CD8-positive, alpha-beta T cell (primary cell): ENCODE measurements at regions of chr2 and their contacts with region 1.

Region 1: GRCh38 chr2:68251187-68251854 is 1.0 kb downstream of the PPP3R1 start:
- DNase-seq: peak; percentile 54 to 94 (median 76)
- ATAC-seq: peak; percentile 66
- H3K4me3 ChIP-seq: peak overlapping the region; percentile 68
- H3K4me3 Mint-ChIP-seq: peak overlapping the region; percentile 89
- H3K27ac ChIP-seq: peak overlapping the region; percentile 84 to 85
- H3K27ac Mint-ChIP-seq: peak overlapping the region; percentile 95
- H3K4me1 ChIP-seq: peaks cover 60% of the 10 kb centered on the region
- H3K4me1 Mint-ChIP-seq: peaks cover 42% of the 10 kb centered on the region
- H3K27me3 ChIP-seq: no peaks in the 10 kb centered on the region
- H3K27me3 Mint-ChIP-seq: no peaks in the 10 kb centered on the region
- CTCF ChIP-seq: peak; percentile 70

Region 2: GRCh38 chr2:67397143-67397986 is 854.0 kb before region 1 on chr2 and contains the start of gene ETAA1:
- CTCF ChIA-PET with region 1: no interaction called
- POLR2A ChIA-PET with region 1: no interaction called
- intact Hi-C with region 1: loop called (anchors 2 to 5 kb)
- DNase-seq: peak; percentile 87 to 95 (median 94)
- ATAC-seq: peak; percentile 97
- H3K4me3 ChIP-seq: peak within 1 kb of the TSS; percentile 61 to 90
- H3K4me3 Mint-ChIP-seq: peak within 1 kb of the TSS; percentile 97
- H3K27ac ChIP-seq: peak within 1 kb of the TSS; percentile 84 to 86
- H3K27ac Mint-ChIP-seq: peak within 1 kb of the TSS; percentile 98
- H3K4me1 ChIP-seq: peaks cover 8% of the 10 kb centered on the region
- H3K4me1 Mint-ChIP-seq: peaks cover 21% of the 10 kb centered on the region
- H3K27me3 ChIP-seq: no peaks in the 10 kb centered on the region
- H3K27me3 Mint-ChIP-seq: no peaks in the 10 kb centered on the region
- CTCF ChIP-seq: no peak
- total RNA-seq, gene ETAA1: 7.7 to 8.6 TPM

Region 3: GRCh38 chr2:68157402-68158133 is 93.8 kb before region 1 on chr2 and contains the start of gene PNO1:
- CTCF ChIA-PET with region 1: interaction called, 3 read pairs
- POLR2A ChIA-PET with region 1: interaction called, 15 read pairs
- intact Hi-C with region 1: loop called (anchors 1 kb)
- DNase-seq: peak; percentile 95 to 98 (median 97)
- ATAC-seq: peak; percentile 95
- H3K4me3 ChIP-seq: peak within 1 kb of the TSS; percentile 66 to 73
- H3K4me3 Mint-ChIP-seq: peak within 1 kb of the TSS; percentile 97
- H3K27ac ChIP-seq: peak within 1 kb of the TSS; percentile 90 to 94
- H3K27ac Mint-ChIP-seq: peak within 1 kb of the TSS; percentile 100
- H3K4me1 ChIP-seq: peaks cover 34% of the 10 kb centered on the region
- H3K4me1 Mint-ChIP-seq: peaks cover 52% of the 10 kb centered on the region
- H3K27me3 ChIP-seq: no peaks in the 10 kb centered on the region
- H3K27me3 Mint-ChIP-seq: no peaks in the 10 kb centered on the region
- CTCF ChIP-seq: no peak
- total RNA-seq, gene PNO1: 35.3 to 36.0 TPM

Region 4: GRCh38 chr2:68225119-68225632 is 26.1 kb before region 1 on chr2:
- CTCF ChIA-PET with region 1: no interaction called
- POLR2A ChIA-PET with region 1: no interaction called
- intact Hi-C with region 1: loop called (anchors 2 kb)
- DNase-seq: peak in 4 of 9 experiments; percentile 11 to 63 (median 36)
- ATAC-seq: peak; percentile 65
- H3K4me3 ChIP-seq: no peak overlapping the region
- H3K4me3 Mint-ChIP-seq: peak overlapping the region; percentile 5
- H3K27ac ChIP-seq: no peak overlapping the region
- H3K27ac Mint-ChIP-seq: peak overlapping the region; percentile 28
- H3K4me1 ChIP-seq: peaks cover 53% of the 10 kb centered on the region
- H3K4me1 Mint-ChIP-seq: peaks cover 91% of the 10 kb centered on the region
- H3K27me3 ChIP-seq: no peaks in the 10 kb centered on the region
- H3K27me3 Mint-ChIP-seq: no peaks in the 10 kb centered on the region
- CTCF ChIP-seq: no peak

Region 5: DNA sequence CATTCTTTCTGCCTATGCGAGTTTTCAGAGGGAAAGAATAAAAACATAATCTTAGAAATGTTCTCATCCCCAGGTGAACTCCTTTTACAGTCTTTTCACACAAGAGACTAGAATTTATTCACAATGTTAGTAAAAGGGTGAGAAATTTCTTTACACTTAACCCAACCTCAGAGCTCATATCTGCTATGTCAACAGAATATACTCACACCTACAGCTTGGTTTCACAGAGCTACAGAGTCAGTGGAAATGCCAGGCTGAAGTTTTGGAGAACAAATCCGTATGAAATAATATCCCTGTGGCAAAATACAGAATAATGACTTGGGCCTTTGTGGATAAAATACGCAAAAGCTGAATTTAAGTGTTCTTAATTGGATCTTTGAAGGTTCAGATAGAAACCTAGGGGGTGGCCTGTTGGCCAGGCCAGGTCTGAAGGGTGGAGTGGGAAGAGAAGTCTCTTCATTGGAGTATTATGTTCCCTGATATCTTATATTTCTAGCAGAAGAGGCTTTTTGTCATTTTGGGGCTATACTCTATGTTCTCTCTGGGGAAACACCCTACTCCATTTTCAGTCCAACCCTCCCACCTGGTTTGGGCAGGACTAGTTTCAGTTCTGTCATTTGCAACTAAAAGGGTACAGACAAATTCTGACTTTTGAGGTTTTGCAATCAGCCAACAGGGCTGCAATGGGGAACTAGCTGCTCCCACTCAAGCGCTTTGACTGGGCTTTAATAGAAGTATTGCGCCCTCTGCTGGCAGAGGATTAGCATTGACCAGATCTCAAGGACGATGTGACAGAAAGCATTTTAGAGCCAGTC is 190.1 kb after region 1 on chr2:
- CTCF ChIA-PET with region 1: interaction called, 3 read pairs
- POLR2A ChIA-PET with region 1: no interaction called
- intact Hi-C with region 1: loop called in 1 of 2 experiments (anchors 5 kb)
- DNase-seq: peak; percentile 60 to 95 (median 85)
- ATAC-seq: peak; percentile 91
- H3K4me3 ChIP-seq: no peak overlapping the region
- H3K4me3 Mint-ChIP-seq: peak overlapping the region; percentile 49
- H3K27ac ChIP-seq: peak overlapping the region in 1 of 2 experiments; percentile 83
- H3K27ac Mint-ChIP-seq: peak overlapping the region; percentile 93
- H3K4me1 ChIP-seq: peaks cover 6% of the 10 kb centered on the region
- H3K4me1 Mint-ChIP-seq: peaks cover 16% of the 10 kb centered on the region
- H3K27me3 ChIP-seq: no peaks in the 10 kb centered on the region
- H3K27me3 Mint-ChIP-seq: no peaks in the 10 kb centered on the region
- CTCF ChIP-seq: peak; percentile 92

Region 6: GRCh38 chr2:68909793-68910674 is 658.7 kb after region 1 on chr2:
- CTCF ChIA-PET with region 1: no interaction called
- POLR2A ChIA-PET with region 1: no interaction called
- intact Hi-C with region 1: loop called in 1 of 2 experiments (anchors 10 kb)
- DNase-seq: peak; percentile 36 to 82 (median 70)
- ATAC-seq: peak; percentile 21
- H3K4me3 ChIP-seq: no peak overlapping the region
- H3K4me3 Mint-ChIP-seq: no peak overlapping the region
- H3K27ac ChIP-seq: no peak overlapping the region
- H3K27ac Mint-ChIP-seq: peak overlapping the region; percentile 42
- H3K4me1 ChIP-seq: peaks cover 34% of the 10 kb centered on the region
- H3K4me1 Mint-ChIP-seq: peaks cover 34% of the 10 kb centered on the region
- H3K27me3 ChIP-seq: no peaks in the 10 kb centered on the region
- H3K27me3 Mint-ChIP-seq: no peaks in the 10 kb centered on the region
- CTCF ChIP-seq: peak; percentile 98